ENCODE measurements at regions of chr12 and their contacts with region 1.

Region 1: GRCh38 chr12:51851413-51852124 is 3.1 kb upstream of the FIGNL2 start:
- DNase-seq: no peak
- ATAC-seq: no peak
- H3K4me3 ChIP-seq: no peak overlapping the region
- H3K27ac ChIP-seq: no peak overlapping the region
- H3K4me1 ChIP-seq: no peaks in the 10 kb centered on the region
- H3K27me3 ChIP-seq: peaks cover 9% of the 10 kb centered on the region; the same call in 1 of the 2 replicates
- CTCF ChIP-seq: no peak

Region 2: GRCh38 chr12:51083126-51083833 is 768.3 kb before region 1 on chr12 and contains the start of gene CSRNP2:
- CTCF ChIA-PET with region 1: interaction called, 10 read pairs
- POLR2A ChIA-PET with region 1: no interaction called
- intact Hi-C with region 1: no loop called
- DNase-seq: peak; percentile 94
- ATAC-seq: peak; percentile 99
- H3K4me3 ChIP-seq: peak within 1 kb of the TSS; percentile 92
- H3K27ac ChIP-seq: no peak within 1 kb of the TSS
- H3K4me1 ChIP-seq: peaks cover 12% of the 10 kb centered on the region
- H3K27me3 ChIP-seq: no peaks in the 10 kb centered on the region
- CTCF ChIP-seq: no peak
- total RNA-seq, gene CSRNP2: 18.9 and 23.3 TPM in 2 replicates

Measured in PC-3 (cell line).